Naive thymus-derived CD4-positive, alpha-beta T cell (primary cell): ENCODE measurements at regions of chr20 and their contacts with region 1.

Region 1: GRCh38 chr20:38645980-38646858 is 44.6 kb downstream of the ARHGAP40 start:
- DNase-seq: peak; percentile 80 to 97 (median 90)
- ATAC-seq: peak; percentile 99
- H3K4me3 ChIP-seq: peak overlapping the region; percentile 46
- H3K4me3 Mint-ChIP-seq: peak overlapping the region; percentile 74 to 91 (median 84)
- H3K27ac ChIP-seq: no peak overlapping the region
- H3K27ac Mint-ChIP-seq: peak overlapping the region in 3 of 9 donors; percentile 10 to 46 (median 31)
- H3K4me1 ChIP-seq: peaks cover 7 to 8% of the 10 kb centered on the region in 2 donors
- H3K4me1 Mint-ChIP-seq: peaks cover 0 to 8% (median 8%) of the 10 kb centered on the region in 7 donors
- H3K27me3 ChIP-seq: no peaks in the 10 kb centered on the region
- H3K27me3 Mint-ChIP-seq: peaks cover 24 to 49% (median 34%) of the 10 kb centered on the region in 5 donors

Region 2: DNA sequence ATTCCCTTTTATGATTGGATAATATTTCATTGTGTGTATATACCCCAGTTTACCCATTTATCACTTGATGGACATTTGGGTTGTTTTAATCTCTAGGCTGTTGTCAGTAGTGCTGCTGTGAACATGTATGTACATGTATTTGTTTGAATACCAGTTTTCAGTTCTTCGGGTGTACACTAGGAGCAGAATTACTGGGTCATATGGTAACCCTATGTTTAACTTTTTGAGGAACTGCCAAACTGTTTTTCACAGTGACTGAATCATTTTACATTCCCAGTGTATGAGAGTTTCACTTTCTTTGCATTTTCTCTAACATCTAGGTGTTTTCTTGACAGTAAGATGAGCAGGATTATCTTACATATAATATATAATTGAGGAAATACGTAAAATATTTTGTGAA is 109.9 kb before region 1 on chr20:
- CTCF ChIA-PET with region 1: no interaction called
- POLR2A ChIA-PET with region 1: no interaction called
- intact Hi-C with region 1: no loop called
- DNase-seq: no peak
- ATAC-seq: no peak
- H3K4me3 ChIP-seq: no peak overlapping the region
- H3K4me3 Mint-ChIP-seq: no peak overlapping the region
- H3K27ac ChIP-seq: no peak overlapping the region
- H3K27ac Mint-ChIP-seq: peak overlapping the region in 1 of 9 donors; percentile 12
- H3K4me1 ChIP-seq: no peaks in the 10 kb centered on the region
- H3K4me1 Mint-ChIP-seq: peaks cover 0 to 17% (median 0%) of the 10 kb centered on the region in 7 donors
- H3K27me3 ChIP-seq: no peaks in the 10 kb centered on the region
- H3K27me3 Mint-ChIP-seq: no peaks in the 10 kb centered on the region

Region 3: GRCh38 chr20:38674092-38674764 is 28.0 kb after region 1 on chr20:
- CTCF ChIA-PET with region 1: no interaction called
- POLR2A ChIA-PET with region 1: no interaction called
- intact Hi-C with region 1: loop called in 1 of 2 experiments (anchors 1 kb)
- DNase-seq: peak in 7 of 9 donors; percentile 15 to 61 (median 24)
- ATAC-seq: peak; percentile 90
- H3K4me3 ChIP-seq: peak overlapping the region; percentile 61
- H3K4me3 Mint-ChIP-seq: peak overlapping the region; percentile 64 to 91 (median 83)
- H3K27ac ChIP-seq: no peak overlapping the region
- H3K27ac Mint-ChIP-seq: peak overlapping the region in 1 of 9 donors; percentile 70
- H3K4me1 ChIP-seq: peaks cover 6 to 9% of the 10 kb centered on the region in 2 donors
- H3K4me1 Mint-ChIP-seq: peaks cover 6 to 17% (median 9%) of the 10 kb centered on the region in 7 donors
- H3K27me3 ChIP-seq: peaks cover 4 to 22% of the 10 kb centered on the region in 2 donors
- H3K27me3 Mint-ChIP-seq: peaks cover 13 to 60% (median 51%) of the 10 kb centered on the region in 5 donors

Region 4: GRCh38 chr20:38748097-38748860 is 102.1 kb after region 1 on chr20 and contains the start of gene ACTR5:
- CTCF ChIA-PET with region 1: interaction called, 8 read pairs
- POLR2A ChIA-PET with region 1: no interaction called
- intact Hi-C with region 1: loop called (anchors 1 kb)
- DNase-seq: peak; percentile 95 to 99 (median 98)
- ATAC-seq: peak; percentile 96
- H3K4me3 ChIP-seq: peak within 1 kb of the TSS; percentile 72
- H3K4me3 Mint-ChIP-seq: peak within 1 kb of the TSS; percentile 95 to 99 (median 97)
- H3K27ac ChIP-seq: peak within 1 kb of the TSS; percentile 95
- H3K27ac Mint-ChIP-seq: peak within 1 kb of the TSS; percentile 93 to 100 (median 99)
- H3K4me1 ChIP-seq: peaks cover 12 to 13% of the 10 kb centered on the region in 2 donors
- H3K4me1 Mint-ChIP-seq: peaks cover 11 to 40% (median 22%) of the 10 kb centered on the region in 7 donors
- H3K27me3 ChIP-seq: no peaks in the 10 kb centered on the region
- H3K27me3 Mint-ChIP-seq: peaks cover 4 to 13% (median 5%) of the 10 kb centered on the region in 5 donors
- total RNA-seq, gene ACTR5: 8.9 to 20.8 (median 15.2) TPM

Region 5: GRCh38 chr20:38893565-38894090 is 247.4 kb after region 1 on chr20:
- CTCF ChIA-PET with region 1: interaction called, 13 read pairs
- POLR2A ChIA-PET with region 1: no interaction called
- intact Hi-C with region 1: loop called (anchors 1 kb)
- DNase-seq: peak; percentile 59 to 85 (median 77)
- ATAC-seq: peak; percentile 92
- H3K4me3 ChIP-seq: peak overlapping the region; percentile 33
- H3K4me3 Mint-ChIP-seq: peak overlapping the region in 8 of 10 donors; percentile 5 to 64 (median 43)
- H3K27ac ChIP-seq: peak overlapping the region; percentile 42
- H3K27ac Mint-ChIP-seq: peak overlapping the region; percentile 14 to 94 (median 70)
- H3K4me1 ChIP-seq: peaks cover 7 to 10% of the 10 kb centered on the region in 2 donors
- H3K4me1 Mint-ChIP-seq: peaks cover 21 to 52% (median 29%) of the 10 kb centered on the region in 7 donors
- H3K27me3 ChIP-seq: no peaks in the 10 kb centered on the region
- H3K27me3 Mint-ChIP-seq: no peaks in the 10 kb centered on the region

Region 6: DNA sequence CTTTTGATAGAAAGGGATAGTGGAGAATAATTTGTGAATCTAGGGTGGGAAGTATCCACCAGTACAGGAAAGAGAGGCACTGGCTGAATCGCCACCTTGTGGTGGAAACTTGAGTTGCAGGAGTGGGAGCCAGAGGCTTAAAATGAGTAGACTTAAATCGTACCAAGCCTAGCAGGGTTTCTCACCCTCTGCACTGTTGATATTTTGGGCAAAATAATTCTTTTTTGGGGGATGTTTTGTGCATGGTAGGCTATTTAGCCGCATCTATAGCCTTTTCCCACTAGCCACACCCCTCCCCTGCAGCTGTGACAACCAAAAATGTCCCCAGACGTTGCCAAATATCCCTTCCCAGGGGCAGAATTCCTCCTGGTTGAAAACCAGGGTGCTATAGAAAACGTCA is 435.0 kb after region 1 on chr20:
- CTCF ChIA-PET with region 1: no interaction called
- POLR2A ChIA-PET with region 1: no interaction called
- intact Hi-C with region 1: loop called (anchors 1 kb)
- DNase-seq: peak; percentile 46 to 81 (median 68)
- ATAC-seq: peak; percentile 78
- H3K4me3 ChIP-seq: no peak overlapping the region
- H3K4me3 Mint-ChIP-seq: no peak overlapping the region
- H3K27ac ChIP-seq: no peak overlapping the region
- H3K27ac Mint-ChIP-seq: no peak overlapping the region
- H3K4me1 ChIP-seq: no peaks in the 10 kb centered on the region
- H3K4me1 Mint-ChIP-seq: peaks cover 0 to 12% (median 0%) of the 10 kb centered on the region in 7 donors
- H3K27me3 ChIP-seq: no peaks in the 10 kb centered on the region
- H3K27me3 Mint-ChIP-seq: peaks cover 11 to 52% (median 26%) of the 10 kb centered on the region in 5 donors